Activated CD4-positive, alpha-beta memory T cell treated with anti-CD3 and anti-CD28 coated beads, Interleukin-2, amount 10 ng/mL, durations not matched to agents 7 days and 5 days (primary cell): ENCODE measurements at regions of chr9 and their contacts with region 1.

Region 1: GRCh38 chr9:120892748-120893610 is 16.0 kb upstream of the PHF19 start:
- DNase-seq: peak; percentile 76
- H3K4me3 Mint-ChIP-seq: peak overlapping the region; percentile 65
- H3K27ac Mint-ChIP-seq: peak overlapping the region; percentile 94
- H3K4me1 Mint-ChIP-seq: peaks cover 90% of the 10 kb centered on the region
- H3K27me3 Mint-ChIP-seq: no peaks in the 10 kb centered on the region

Region 2: DNA sequence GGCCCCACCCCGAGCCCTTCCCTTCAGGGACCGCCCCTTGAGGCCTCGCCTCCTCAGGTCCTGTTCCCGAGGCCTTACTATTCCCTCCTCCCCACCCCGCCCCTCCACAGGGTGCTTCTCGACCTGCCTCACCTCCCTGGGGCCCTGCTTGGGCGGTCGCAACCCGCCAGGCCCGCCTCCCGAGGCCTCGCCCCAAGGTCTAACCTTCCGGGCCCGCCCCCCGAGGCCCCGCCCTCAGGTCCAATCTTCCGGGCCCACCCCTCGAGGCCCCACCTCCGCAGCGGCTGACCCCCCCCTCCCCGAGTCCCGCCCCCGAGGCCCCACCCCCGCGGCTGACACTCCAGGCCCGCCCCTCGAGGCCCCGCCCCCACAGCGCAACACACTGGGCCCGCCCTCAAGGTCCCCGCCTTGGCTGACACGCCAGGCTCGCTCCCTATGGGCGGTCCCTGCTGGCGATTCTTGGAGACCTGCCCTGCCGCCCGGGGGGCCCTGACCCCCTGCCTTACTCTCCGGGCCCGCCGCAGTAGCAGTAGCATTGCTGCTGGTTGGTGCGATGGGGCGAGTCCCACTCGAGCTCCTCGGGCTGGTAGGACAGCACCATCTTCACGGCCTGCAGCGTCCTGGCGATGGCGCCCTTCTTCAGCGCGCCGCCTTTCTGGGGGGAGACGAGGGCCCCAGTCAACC is 24.2 kb before region 1 on chr9:
- CTCF ChIA-PET with region 1: interaction called, 12 read pairs
- POLR2A ChIA-PET with region 1: interaction called, 553 read pairs
- DNase-seq: peak; percentile 97
- H3K4me3 Mint-ChIP-seq: peak overlapping the region; percentile 87
- H3K27ac Mint-ChIP-seq: peak overlapping the region; percentile 92
- H3K4me1 Mint-ChIP-seq: peaks cover 52% of the 10 kb centered on the region
- H3K27me3 Mint-ChIP-seq: no peaks in the 10 kb centered on the region

Region 3: GRCh38 chr9:120904061-120904977 is 11.3 kb after region 1 on chr9:
- CTCF ChIA-PET with region 1: interaction called, 9 read pairs
- POLR2A ChIA-PET with region 1: interaction called, 121 read pairs
- DNase-seq: peak; percentile 59
- H3K4me3 Mint-ChIP-seq: no peak overlapping the region
- H3K27ac Mint-ChIP-seq: peak overlapping the region; percentile 86
- H3K4me1 Mint-ChIP-seq: peaks cover 84% of the 10 kb centered on the region
- H3K27me3 Mint-ChIP-seq: no peaks in the 10 kb centered on the region

Region 4: DNA sequence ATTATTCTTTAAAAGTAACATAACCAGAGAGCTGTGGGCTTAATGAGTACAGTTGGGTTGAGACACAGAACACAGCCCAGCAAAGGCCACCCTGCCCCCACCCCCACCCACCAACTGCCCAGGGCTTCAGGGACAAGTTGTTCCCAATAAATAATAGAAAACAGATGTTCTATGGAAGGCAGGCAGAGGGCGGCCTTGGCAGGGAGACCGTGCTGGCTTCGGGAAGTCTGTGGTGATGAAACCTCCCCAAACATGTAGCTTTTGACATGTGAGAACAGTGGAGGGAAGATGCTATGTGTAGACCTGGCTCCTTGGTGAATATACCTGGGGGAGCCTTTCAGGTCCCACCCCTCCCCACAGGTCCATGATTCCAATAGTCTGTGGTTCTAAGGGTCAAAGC is 23.6 kb after region 1 on chr9:
- CTCF ChIA-PET with region 1: interaction called, 8 read pairs
- POLR2A ChIA-PET with region 1: interaction called, 1,205 read pairs
- DNase-seq: no peak
- H3K4me3 Mint-ChIP-seq: peak overlapping the region; percentile 35
- H3K27ac Mint-ChIP-seq: peak overlapping the region; percentile 82
- H3K4me1 Mint-ChIP-seq: peaks cover 85% of the 10 kb centered on the region
- H3K27me3 Mint-ChIP-seq: no peaks in the 10 kb centered on the region

Region 5: GRCh38 chr9:120936011-120936763 is 43.2 kb after region 1 on chr9:
- CTCF ChIA-PET with region 1: interaction called, 24 read pairs
- POLR2A ChIA-PET with region 1: interaction called, 1,205 read pairs
- DNase-seq: peak; percentile 89
- H3K4me3 Mint-ChIP-seq: peak overlapping the region; percentile 51
- H3K27ac Mint-ChIP-seq: peak overlapping the region; percentile 76
- H3K4me1 Mint-ChIP-seq: peaks cover 59% of the 10 kb centered on the region
- H3K27me3 Mint-ChIP-seq: peaks cover 7% of the 10 kb centered on the region

Region 6: GRCh38 chr9:120965344-120966012 is 72.5 kb after region 1 on chr9:
- CTCF ChIA-PET with region 1: no interaction called
- POLR2A ChIA-PET with region 1: no interaction called
- DNase-seq: no peak
- H3K4me3 Mint-ChIP-seq: no peak overlapping the region
- H3K27ac Mint-ChIP-seq: no peak overlapping the region
- H3K4me1 Mint-ChIP-seq: no peaks in the 10 kb centered on the region
- H3K27me3 Mint-ChIP-seq: peaks cover 8% of the 10 kb centered on the region